ENCODE measurements at regions of chr3 and their contacts with region 1.

Region 1: DNA sequence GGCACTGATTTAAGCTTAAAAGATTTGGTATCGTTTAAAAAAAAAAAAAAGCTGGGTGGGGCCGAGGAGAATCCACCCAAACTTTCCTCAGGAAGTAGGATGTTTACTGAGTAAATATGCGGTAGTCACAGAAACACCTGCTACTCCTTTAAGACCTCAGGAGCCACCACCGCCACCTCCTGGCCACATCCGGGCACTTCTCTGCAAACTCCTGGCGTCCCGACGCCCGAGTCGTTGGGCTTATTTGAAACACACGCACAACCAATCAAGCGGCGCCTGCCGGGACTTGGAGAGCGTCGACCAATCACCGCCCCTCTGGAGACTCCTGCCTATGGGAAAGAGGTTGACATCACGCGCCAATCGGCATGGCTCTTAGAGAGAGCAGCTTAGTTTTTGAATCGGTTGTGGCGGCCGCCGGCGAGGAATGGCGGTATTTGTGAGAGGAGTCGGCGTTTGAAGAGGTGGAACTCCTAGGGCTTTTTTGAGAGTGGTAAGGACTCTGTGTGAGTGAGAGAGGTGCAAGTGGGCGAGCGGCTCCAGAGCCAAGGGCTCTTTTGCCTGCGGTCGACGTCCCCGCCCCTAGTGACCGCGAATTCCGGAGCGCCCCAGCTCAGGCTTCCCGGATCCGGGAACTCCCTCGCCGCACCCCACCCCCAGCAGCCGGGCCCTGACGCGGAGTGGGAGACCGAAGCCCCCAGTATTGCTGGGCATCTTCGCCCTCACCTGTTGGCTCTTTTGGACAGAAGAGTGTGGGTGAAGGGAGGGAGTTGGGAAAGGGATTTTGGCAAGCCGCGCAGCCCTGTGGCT is at the start of gene ECT2:
- DNase-seq: peak; percentile 100
- ATAC-seq: peak; percentile 91
- H3K4me3 ChIP-seq: peak within 1 kb of the TSS; percentile 94
- H3K27ac ChIP-seq: peak within 1 kb of the TSS; percentile 92
- H3K4me1 ChIP-seq: peaks cover 54% of the 10 kb centered on the region
- H3K27me3 ChIP-seq: no peaks in the 10 kb centered on the region
- CTCF ChIP-seq: peak; percentile 82
- total RNA-seq, gene ECT2: 66.9 and 77.4 TPM in 2 replicates

Region 2: DNA sequence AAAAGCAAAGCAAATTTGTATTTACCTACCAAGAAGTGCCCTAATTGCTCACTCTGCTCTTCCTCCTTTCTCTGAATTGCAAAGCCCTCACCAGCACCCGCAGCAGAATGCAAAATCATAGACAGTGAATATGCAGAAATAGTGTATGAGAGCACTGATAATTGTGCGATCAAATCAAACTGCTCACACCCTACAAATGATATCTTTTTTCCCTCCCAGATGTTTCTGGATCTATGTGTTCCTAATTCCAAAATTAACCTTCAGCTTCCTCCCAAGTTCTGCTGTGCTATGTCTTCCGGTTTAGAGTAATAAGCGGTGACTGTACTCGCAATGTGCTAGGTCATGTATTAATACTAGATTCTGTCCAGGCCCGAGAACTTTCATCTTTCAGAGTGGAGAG is 305.8 kb before region 1 on chr3:
- CTCF ChIA-PET with region 1: no interaction called
- POLR2A ChIA-PET with region 1: no interaction called
- intact Hi-C with region 1: no loop called
- DNase-seq: no peak
- ATAC-seq: no peak
- H3K4me3 ChIP-seq: no peak overlapping the region
- H3K27ac ChIP-seq: no peak overlapping the region
- H3K4me1 ChIP-seq: peaks cover 10% of the 10 kb centered on the region
- H3K27me3 ChIP-seq: no peaks in the 10 kb centered on the region; the same call in 1 of the 2 replicates
- CTCF ChIP-seq: no peak

Region 3: DNA sequence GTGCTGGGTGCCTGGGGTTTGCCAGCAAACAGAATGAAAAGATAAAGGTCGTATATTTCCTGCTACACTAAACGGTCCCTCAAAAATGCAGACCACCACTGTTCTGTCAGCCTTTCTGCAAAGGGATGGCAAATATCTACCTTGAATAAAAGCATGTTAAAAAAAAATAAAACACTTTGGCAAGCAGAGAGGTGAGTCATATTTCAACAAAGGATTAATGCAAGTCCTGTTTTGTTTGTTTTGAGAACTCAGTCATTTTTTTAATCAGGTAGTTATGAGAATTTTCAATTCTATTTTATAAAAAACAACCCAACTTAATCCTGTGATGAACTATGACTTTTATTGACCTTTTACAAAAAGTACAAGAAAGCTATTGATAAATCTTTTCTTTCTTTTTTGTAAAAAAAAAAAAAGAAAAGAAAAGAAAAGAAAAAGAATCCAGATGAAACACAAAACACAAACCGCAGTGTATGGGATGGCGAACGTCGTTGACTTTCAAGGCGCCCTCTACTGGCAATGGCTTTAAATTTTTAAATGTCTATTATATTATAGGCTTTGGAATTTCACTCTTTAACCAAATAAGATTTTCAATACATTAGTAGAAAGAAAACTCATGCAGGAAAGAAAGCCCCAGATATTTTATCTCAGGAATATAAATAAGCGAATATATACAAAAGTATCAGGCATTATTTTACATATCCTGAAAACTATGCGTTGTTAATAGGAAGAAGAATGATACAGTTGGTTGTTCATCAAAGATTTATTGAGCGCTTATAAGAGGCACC is 127.5 kb before region 1 on chr3:
- CTCF ChIA-PET with region 1: interaction called, 6 read pairs
- POLR2A ChIA-PET with region 1: interaction called, 7 read pairs
- intact Hi-C with region 1: loop called (anchors 1 kb)
- DNase-seq: peak; percentile 78
- ATAC-seq: peak; percentile 73
- H3K4me3 ChIP-seq: peak overlapping the region; percentile 70
- H3K27ac ChIP-seq: peak overlapping the region; percentile 83
- H3K4me1 ChIP-seq: peaks cover 32% of the 10 kb centered on the region
- H3K27me3 ChIP-seq: no peaks in the 10 kb centered on the region
- CTCF ChIP-seq: peak; percentile 76

Region 4: DNA sequence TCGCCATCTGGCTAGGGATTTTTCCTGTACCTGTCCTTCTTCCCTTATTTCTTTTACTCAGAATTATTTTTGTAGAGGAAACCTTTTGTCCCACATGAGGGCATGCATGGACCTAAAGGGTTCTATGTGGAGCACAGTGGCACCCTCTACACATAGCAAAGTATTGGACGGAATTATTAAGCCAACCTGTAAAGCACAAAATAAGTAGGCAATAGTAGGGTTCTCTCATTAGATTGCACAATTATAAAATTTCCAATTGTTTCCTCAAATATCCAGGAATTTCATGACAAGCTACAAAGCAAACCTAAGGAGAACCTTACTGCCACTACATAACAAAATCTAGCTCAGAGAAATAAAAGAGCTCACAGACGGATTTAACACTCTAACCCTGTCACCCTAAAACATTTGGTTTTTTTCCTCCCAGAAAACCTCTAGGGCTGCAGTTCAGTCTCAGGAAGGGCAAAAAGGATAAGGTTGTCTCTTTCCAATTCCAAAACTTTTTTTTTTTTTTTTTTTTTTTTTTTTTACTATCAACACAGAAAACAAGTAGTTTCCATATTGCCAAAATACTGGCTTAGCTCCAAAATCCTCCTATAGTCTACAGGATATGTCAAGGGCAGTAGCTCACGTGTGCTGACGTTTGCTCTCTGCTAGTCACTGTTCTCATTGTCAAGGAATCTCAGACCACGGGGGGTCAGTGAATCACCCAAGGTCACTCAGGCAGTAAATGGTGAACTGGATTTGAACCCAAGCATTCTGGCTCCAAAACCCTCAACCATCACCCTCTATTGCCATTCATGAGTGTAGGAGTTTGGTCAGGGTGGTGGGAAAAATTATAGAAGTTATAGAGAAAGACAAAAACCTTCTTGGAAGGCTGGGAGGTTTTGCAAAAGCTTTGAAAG is 92.0 kb before region 1 on chr3:
- CTCF ChIA-PET with region 1: interaction called, 7 read pairs
- POLR2A ChIA-PET with region 1: interaction called, 34 read pairs
- intact Hi-C with region 1: no loop called
- DNase-seq: peak; percentile 85
- ATAC-seq: peak; percentile 78
- H3K4me3 ChIP-seq: no peak overlapping the region
- H3K27ac ChIP-seq: peak overlapping the region; percentile 57
- H3K4me1 ChIP-seq: peaks cover 15% of the 10 kb centered on the region
- H3K27me3 ChIP-seq: no peaks in the 10 kb centered on the region
- CTCF ChIP-seq: no peak

Region 5: GRCh38 chr3:172690926-172691325 is 59.6 kb before region 1 on chr3:
- CTCF ChIA-PET with region 1: interaction called, 12 read pairs
- POLR2A ChIA-PET with region 1: interaction called, 3 read pairs
- intact Hi-C with region 1: no loop called
- DNase-seq: peak; percentile 21
- ATAC-seq: peak; percentile 4; the same call in 1 of the 2 replicates
- H3K4me3 ChIP-seq: peak overlapping the region; percentile 14; the same call in 1 of the 2 replicates
- H3K27ac ChIP-seq: peak overlapping the region; percentile 12; the same call in 1 of the 2 replicates
- H3K4me1 ChIP-seq: peaks cover 28% of the 10 kb centered on the region
- H3K27me3 ChIP-seq: no peaks in the 10 kb centered on the region
- CTCF ChIP-seq: no peak

Region 6: DNA sequence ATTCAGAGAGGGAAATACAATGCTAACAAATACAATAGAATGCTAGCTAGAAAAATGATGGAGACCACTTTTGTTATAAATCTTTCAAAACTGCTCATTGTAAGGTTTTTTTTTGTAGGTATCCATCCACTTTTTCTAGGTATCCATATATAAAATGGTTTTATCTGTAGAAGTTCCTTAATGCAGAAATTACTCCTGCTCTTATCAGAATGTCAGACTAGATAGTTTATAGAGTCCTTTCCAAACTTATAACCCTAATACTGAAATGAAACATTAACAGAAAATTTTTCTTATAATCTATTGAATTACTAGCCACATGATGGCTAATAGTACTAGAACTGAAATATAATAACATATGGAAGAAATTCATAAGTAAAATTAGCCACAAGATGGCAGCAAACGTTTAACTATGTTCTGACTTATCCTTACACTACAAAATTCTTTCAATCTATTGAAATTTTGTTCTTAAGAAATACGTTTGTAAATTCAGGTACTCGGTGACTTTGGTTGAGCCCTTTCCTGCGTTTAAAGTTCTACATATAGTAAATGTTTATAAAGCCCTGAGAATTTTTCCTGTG is 58.5 kb after region 1 on chr3:
- CTCF ChIA-PET with region 1: no interaction called
- POLR2A ChIA-PET with region 1: interaction called, 10 read pairs
- intact Hi-C with region 1: no loop called
- DNase-seq: peak; percentile 60
- ATAC-seq: peak; percentile 39; the same call in 1 of the 2 replicates
- H3K4me3 ChIP-seq: no peak overlapping the region
- H3K27ac ChIP-seq: no peak overlapping the region
- H3K4me1 ChIP-seq: no peaks in the 10 kb centered on the region
- H3K27me3 ChIP-seq: no peaks in the 10 kb centered on the region
- CTCF ChIP-seq: peak; percentile 66

Measured in PC-3 (cell line).